ENCODE measurements at regions of chr3 and their contacts with region 1.

Region 1: DNA sequence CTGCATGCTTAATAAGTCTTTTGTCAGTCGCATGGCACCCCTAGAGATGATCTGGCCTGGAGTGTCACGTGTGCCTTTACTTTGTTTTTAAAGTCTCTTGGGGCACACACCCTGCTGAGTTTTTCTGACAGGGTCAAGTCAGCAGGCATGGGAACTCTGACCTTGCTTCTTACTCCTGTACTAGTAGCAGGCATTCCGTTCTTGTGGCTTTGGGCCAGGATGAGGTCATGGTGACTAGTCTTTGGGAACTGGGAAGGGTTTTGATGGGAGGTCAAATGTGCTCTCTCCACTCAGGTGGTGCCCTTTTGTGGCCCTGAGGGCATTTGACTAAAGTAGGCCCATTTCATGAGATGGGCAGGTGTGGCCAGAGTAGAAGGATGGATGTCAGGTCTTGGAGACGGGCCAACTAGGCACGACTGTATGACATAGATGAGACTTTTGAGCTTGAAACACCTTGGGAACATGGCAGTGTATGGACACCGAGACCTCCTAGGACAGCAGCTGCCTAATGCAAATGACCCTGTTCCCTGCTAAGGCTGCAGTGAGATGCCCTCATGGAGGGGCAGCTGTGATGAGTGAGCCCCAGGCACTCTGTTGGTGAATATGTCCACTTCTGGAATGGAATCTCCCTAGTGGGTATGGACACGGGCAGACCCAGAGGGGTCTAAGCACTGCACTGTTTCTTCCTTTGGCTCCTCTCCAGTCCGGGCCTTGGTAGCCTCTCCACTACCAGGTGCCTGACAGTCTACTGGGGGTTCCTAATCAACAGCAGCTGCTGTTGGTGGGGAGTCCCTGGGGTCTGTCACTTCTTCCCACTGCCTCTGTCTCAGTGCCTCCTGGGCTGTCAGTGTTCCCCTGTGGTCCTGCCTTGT is 16.4 kb downstream of the SRPRB start:
- DNase-seq: peak in 2 of 10 donors; percentile 35 to 55
- H3K4me3 ChIP-seq: no peak overlapping the region
- H3K27ac ChIP-seq: peak overlapping the region in 8 of 59 donors; percentile 5 to 41 (median 20)
- H3K27me3 ChIP-seq: no peaks in the 10 kb centered on the region
- CTCF ChIP-seq: peak in 13 of 56 donors; percentile 16 to 51 (median 36)

Region 2: DNA sequence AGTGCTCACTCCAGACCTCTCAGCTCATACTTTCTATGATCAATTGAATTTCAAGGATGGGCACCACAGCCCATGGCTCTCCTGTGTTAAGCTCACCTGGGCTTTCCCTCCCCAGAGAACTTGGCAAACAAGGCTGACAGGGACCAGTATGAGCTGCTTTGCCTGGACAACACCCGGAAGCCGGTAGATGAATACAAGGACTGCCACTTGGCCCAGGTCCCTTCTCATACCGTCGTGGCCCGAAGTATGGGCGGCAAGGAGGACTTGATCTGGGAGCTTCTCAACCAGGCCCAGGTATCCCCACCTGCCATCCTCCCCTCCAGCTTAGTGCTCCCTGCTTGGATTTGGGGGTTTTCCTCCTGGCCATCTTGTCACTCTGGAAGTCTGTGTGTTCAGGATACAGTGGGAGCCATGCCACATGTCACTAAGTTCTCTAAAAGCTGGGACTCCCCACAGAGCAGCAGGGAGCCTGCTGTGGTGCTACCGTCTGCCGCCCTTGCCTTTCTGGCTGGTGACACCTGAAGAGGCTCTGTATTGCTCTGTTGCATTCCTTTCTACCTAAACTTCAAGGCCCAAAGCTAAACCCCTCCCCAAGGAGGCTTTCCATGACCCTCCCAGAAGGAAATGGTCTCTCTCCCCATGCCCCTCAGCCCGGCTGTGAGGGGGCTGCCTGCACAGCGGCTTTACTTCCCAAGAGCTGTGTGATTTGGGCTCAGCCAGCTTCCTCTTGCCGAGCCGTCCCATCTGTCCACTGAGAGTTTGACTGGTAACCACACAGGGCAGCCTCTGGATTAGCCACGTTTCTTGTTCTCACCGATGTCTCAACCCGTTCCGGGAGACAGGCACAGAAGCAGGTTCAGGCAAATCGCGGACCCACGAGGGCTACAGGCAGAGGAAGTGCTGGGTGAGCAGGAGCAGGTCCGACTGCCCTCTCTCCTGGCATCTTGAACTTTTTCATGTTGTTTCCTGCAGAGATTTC is 65.0 kb before region 1 on chr3:
- intact Hi-C with region 1: no loop called
- DNase-seq: peak in 1 of 10 donors; percentile 30
- H3K4me3 ChIP-seq: no peak overlapping the region
- H3K27ac ChIP-seq: peak overlapping the region in 1 of 59 donors; percentile 9
- H3K27me3 ChIP-seq: no peaks in the 10 kb centered on the region
- CTCF ChIP-seq: no peak

Region 3: GRCh38 chr3:133927540-133928066 is 105.6 kb after region 1 on chr3:
- intact Hi-C with region 1: loop called (anchors 2 kb)
- DNase-seq: peak in 4 of 10 donors; percentile 39 to 76 (median 58)
- H3K4me3 ChIP-seq: peak overlapping the region; percentile 36 to 77 (median 64)
- H3K27ac ChIP-seq: peak overlapping the region in 10 of 59 donors; percentile 1 to 75 (median 28)
- H3K27me3 ChIP-seq: no peaks in the 10 kb centered on the region
- CTCF ChIP-seq: peak in 55 of 56 donors; percentile 46 to 98 (median 75)

Region 4: GRCh38 chr3:133943639-133944141 is 121.7 kb after region 1 on chr3:
- intact Hi-C with region 1: no loop called
- DNase-seq: peak in 2 of 10 donors; percentile 11 to 16
- H3K4me3 ChIP-seq: no peak overlapping the region
- H3K27ac ChIP-seq: peak overlapping the region in 5 of 59 donors; percentile 7 to 65 (median 47)
- H3K27me3 ChIP-seq: no peaks in the 10 kb centered on the region
- CTCF ChIP-seq: no peak

Region 5: DNA sequence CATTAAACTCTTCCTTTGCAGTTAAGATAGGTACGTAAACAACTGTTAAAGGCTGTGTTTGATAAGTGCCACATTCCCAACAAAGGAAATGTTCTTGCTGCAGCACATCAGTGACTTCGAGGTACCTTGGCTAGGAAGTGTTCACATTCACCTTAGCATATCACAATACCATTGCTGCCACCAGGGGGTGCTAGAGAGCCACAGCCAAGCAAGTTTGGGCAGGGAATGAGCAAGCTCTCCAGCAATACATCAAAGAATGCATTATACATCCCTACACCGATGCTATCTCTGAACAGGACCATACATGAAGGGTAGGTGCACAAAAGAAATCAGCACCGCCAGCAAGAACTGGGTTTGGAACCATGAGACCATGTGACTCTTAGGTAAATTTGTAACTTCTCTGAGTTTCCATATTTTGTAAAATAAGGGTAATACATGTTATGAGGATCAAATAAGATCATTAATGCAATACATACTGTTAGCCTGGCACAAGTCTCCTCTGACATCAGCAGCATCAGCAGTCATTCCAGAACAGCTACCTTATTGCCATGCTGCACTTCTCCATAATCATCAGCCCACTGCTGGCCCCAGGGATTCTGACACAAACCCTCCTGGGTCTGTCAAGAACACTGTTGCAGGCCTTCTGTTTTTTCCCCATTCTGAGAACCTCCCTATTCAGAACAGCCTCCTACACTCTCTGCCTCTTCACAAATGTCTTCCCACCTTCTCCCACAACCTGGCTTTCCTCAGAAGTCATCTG is 391.1 kb after region 1 on chr3:
- intact Hi-C with region 1: loop called in 1 of 2 experiments (anchors 10 kb)
- DNase-seq: peak; percentile 72 to 93 (median 85)
- H3K4me3 ChIP-seq: no peak overlapping the region
- H3K27ac ChIP-seq: peak overlapping the region in 9 of 59 donors; percentile 7 to 48 (median 17)
- H3K27me3 ChIP-seq: no peaks in the 10 kb centered on the region
- CTCF ChIP-seq: peak; percentile 86 to 100 (median 97)

Region 6: GRCh38 chr3:134485718-134486576 is 663.9 kb after region 1 on chr3 and contains the starts of genes ANAPC13 and CEP63:
- intact Hi-C with region 1: loop called in 1 of 2 experiments (anchors 10 kb)
- DNase-seq: peak; percentile 78 to 95 (median 90)
- H3K4me3 ChIP-seq: peak within 1 kb of the TSS; percentile 68 to 100 (median 93)
- H3K27ac ChIP-seq: peak within 1 kb of the TSS; percentile 85 to 98 (median 95)
- H3K27me3 ChIP-seq: no peaks in the 10 kb centered on the region
- CTCF ChIP-seq: peak in 28 of 56 donors; percentile 5 to 53 (median 20)
- total RNA-seq, gene ANAPC13: 18.9 to 65.9 (median 47.8) TPM
- total RNA-seq, gene CEP63: 27.2 to 57.8 (median 39.4) TPM

Measured in dorsolateral prefrontal cortex (tissue), 120 donors.